Activated B cell treated with CpG ODN at 0.5 μM for 24 hours (primary cell): ENCODE measurements at regions of chr6 and their contacts with region 1.

Region 1: GRCh38 chr6:133952815-133953633 is at the start of gene TBPL1:
- DNase-seq: peak; percentile 83
- ATAC-seq: peak; percentile 84
- H3K4me3 Mint-ChIP-seq: peak within 1 kb of the TSS; percentile 95
- H3K27ac Mint-ChIP-seq: peak within 1 kb of the TSS; percentile 98
- H3K4me1 Mint-ChIP-seq: peaks cover 53% of the 10 kb centered on the region
- H3K27me3 Mint-ChIP-seq: no peaks in the 10 kb centered on the region
- CTCF ChIP-seq: no peak
- total RNA-seq, gene TBPL1: 33.0 and 35.7 TPM in 2 replicates

Region 2: DNA sequence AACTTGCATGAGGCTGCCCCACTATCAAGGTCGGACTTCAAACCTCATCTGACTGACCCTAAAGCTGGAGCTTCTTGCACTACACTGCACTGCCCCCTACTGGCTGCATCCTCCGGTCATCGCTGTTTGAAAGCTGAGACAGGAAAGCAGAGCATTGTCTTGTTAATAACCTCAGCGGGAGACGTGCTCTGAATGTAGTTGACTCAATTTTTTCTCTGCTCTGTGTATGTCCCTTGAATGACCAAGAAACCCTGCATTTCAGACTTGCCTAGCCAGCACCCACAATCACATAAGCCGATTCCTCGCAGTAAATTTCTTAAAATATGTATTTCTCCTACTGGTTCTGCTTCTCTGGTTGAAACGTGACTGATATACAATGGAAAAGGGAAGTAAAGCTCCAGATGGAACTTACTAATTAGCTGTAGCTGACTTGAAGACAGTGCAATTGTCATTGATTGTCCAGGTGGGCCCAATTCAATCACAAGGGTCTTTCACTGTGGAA is 36.3 kb before region 1 on chr6:
- CTCF ChIA-PET with region 1: no interaction called
- POLR2A ChIA-PET with region 1: no interaction called
- intact Hi-C with region 1: no loop called
- DNase-seq: peak; percentile 40
- ATAC-seq: peak; percentile 34
- H3K4me3 Mint-ChIP-seq: no peak overlapping the region
- H3K27ac Mint-ChIP-seq: no peak overlapping the region
- H3K4me1 Mint-ChIP-seq: peaks cover 4% of the 10 kb centered on the region
- H3K27me3 Mint-ChIP-seq: peaks cover 17% of the 10 kb centered on the region
- CTCF ChIP-seq: peak; percentile 76

Region 3: DNA sequence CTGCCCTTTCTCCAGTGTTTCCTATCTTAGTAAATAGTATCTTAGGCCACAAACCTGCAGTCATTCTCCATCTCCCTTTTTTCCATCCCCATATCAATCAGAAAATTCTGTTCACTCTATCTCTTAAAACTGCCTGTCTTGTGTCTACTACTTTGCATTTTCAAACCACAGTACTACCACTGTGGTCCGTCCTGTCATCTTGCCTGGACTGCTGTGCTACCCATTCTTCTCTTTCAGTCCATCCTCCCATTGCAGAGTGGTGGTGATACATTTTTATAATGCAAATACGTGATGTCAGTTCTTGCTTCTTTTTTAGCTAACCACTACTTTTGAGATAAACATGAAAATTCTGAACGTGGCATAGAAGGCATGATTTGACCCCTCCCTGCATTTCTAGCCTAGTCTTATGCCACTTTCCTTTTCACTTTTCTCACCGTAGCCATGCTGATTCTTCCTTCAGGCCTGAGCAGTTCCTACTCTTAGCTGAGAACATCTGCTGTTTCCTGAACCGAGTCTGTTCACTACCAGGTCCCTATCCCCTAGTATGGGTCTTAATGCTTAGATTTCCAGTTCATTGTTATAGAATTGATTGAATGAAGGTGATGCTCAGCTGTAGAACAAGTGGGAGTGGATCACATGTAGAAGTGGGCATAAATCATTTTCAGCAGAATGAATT is 13.8 kb after region 1 on chr6:
- CTCF ChIA-PET with region 1: interaction called, 7 read pairs
- POLR2A ChIA-PET with region 1: interaction called, 15 read pairs
- intact Hi-C with region 1: loop called (anchors 1 kb)
- DNase-seq: no peak
- ATAC-seq: peak; percentile 91
- H3K4me3 Mint-ChIP-seq: peak overlapping the region; percentile 56
- H3K27ac Mint-ChIP-seq: peak overlapping the region; percentile 75
- H3K4me1 Mint-ChIP-seq: peaks cover 58% of the 10 kb centered on the region
- H3K27me3 Mint-ChIP-seq: no peaks in the 10 kb centered on the region
- CTCF ChIP-seq: no peak

Region 4: DNA sequence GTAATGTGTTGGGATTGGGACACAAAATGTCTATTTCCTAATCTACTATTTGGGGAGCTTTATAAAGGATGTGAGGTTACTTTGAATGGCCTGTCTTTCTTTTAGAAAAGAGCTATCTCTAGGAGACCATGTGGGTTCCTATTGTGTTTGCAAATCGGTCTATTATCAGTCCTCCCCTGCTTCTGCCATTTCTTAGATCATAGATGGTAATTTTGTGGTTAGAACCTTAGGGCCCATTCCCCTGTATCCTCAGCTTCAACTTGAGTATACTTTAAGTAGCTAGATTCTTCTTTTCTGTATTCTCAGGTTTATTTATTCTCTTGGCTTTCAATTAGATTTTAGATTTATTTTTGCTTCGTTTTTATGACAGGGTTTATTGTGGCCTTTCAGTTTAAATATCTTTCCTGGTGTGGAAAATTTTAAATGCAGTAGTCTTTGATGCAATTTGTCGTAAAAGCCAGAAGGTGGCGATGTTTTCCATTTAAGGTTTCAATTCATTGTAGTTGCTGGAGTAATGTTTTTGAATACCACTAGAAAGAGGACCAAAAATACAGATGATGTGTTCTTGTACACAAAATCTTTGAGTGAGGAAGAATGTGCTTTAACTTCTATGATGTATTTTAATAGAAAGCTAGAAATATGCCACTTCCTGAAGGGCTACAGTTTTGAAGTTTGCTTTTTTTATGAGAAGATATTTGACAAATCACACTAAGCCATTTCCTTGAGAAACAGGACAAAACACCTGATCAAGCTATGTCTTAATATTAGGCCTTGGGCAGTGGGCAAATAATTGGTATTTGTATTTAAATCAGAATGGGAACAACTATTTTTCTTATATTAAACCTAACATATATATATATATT is 20.3 kb after region 1 on chr6:
- CTCF ChIA-PET with region 1: interaction called, 17 read pairs
- POLR2A ChIA-PET with region 1: interaction called, 8 read pairs
- intact Hi-C with region 1: loop called (anchors 1 kb)
- DNase-seq: no peak
- ATAC-seq: peak; percentile 61
- H3K4me3 Mint-ChIP-seq: no peak overlapping the region
- H3K27ac Mint-ChIP-seq: no peak overlapping the region
- H3K4me1 Mint-ChIP-seq: peaks cover 21% of the 10 kb centered on the region
- H3K27me3 Mint-ChIP-seq: no peaks in the 10 kb centered on the region
- CTCF ChIP-seq: peak; percentile 86

Region 5: GRCh38 chr6:134047673-134048072 is 94.6 kb after region 1 on chr6:
- CTCF ChIA-PET with region 1: interaction called, 3 read pairs
- POLR2A ChIA-PET with region 1: interaction called, 7 read pairs
- intact Hi-C with region 1: loop called (anchors 1 kb)
- DNase-seq: no peak
- ATAC-seq: no peak
- H3K4me3 Mint-ChIP-seq: no peak overlapping the region
- H3K27ac Mint-ChIP-seq: no peak overlapping the region
- H3K4me1 Mint-ChIP-seq: peaks cover 11% of the 10 kb centered on the region
- H3K27me3 Mint-ChIP-seq: peaks cover 8% of the 10 kb centered on the region
- CTCF ChIP-seq: no peak